Caco-2 (cell line): ENCODE measurements at regions of chr12 and their contacts with region 1.

Region 1: GRCh38 chr12:80200408-80200807 is 101.1 kb downstream of the OTOGL start:
- DNase-seq: no peak
- H3K4me3 ChIP-seq: no peak overlapping the region
- H3K4me3 Mint-ChIP-seq: no peak overlapping the region
- H3K27ac Mint-ChIP-seq: no peak overlapping the region
- H3K4me1 ChIP-seq: no peaks in the 10 kb centered on the region
- H3K4me1 Mint-ChIP-seq: peaks cover 6% of the 10 kb centered on the region
- H3K27me3 ChIP-seq: no peaks in the 10 kb centered on the region
- H3K27me3 Mint-ChIP-seq: peaks cover 3% of the 10 kb centered on the region
- CTCF ChIP-seq: no peak

Region 2: DNA sequence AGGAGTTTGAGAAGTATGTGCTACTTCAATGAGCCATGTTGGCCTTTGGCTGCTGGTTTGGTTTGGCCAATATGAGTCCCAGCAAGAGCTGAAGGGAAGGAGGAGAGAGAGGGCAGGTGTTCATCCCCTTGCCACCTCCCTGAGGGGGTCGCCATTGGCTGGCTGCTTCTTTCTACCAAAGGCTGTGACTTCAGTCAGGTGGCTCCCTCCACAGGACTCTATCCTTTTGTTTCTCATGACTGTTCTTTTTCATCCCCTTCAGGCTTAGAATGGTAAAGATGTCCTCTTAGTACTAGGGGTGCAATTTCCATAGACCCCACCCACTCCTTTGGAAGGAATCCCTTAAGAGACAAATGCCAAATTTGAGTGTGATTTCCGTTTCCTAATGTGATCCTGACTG is 132.2 kb before region 1 on chr12:
- CTCF ChIA-PET with region 1: no interaction called
- POLR2A ChIA-PET with region 1: no interaction called
- intact Hi-C with region 1: no loop called
- DNase-seq: peak in 1 of 2 experiments; percentile 26
- H3K4me3 ChIP-seq: no peak overlapping the region
- H3K4me3 Mint-ChIP-seq: no peak overlapping the region
- H3K27ac Mint-ChIP-seq: no peak overlapping the region
- H3K4me1 ChIP-seq: no peaks in the 10 kb centered on the region
- H3K4me1 Mint-ChIP-seq: no peaks in the 10 kb centered on the region
- H3K27me3 ChIP-seq: no peaks in the 10 kb centered on the region
- H3K27me3 Mint-ChIP-seq: peaks cover 12% of the 10 kb centered on the region
- CTCF ChIP-seq: no peak

Region 3: DNA sequence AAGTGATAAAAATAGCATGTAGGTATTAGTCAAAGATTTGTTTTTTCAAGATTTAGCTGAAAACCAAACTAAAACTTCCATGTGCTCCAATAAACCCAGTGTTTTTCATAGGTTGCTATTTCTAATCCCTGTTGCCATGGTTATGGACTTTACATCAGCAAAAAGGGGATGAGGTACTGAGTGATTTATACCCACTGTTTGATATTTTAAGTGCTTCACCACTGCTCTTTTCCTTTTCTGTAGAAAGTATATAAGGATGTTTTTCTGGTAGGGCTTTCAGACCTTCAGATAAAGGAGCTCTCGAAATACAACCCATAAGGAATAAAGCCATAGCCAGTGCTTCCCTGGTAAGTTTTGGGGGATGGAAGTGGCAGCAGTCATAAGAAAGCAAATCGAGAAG is 101.1 kb before region 1 on chr12 and contains the start of gene OTOGL:
- CTCF ChIA-PET with region 1: no interaction called
- POLR2A ChIA-PET with region 1: no interaction called
- intact Hi-C with region 1: no loop called
- DNase-seq: no peak
- H3K4me3 ChIP-seq: no peak within 1 kb of the TSS
- H3K4me3 Mint-ChIP-seq: no peak within 1 kb of the TSS
- H3K27ac Mint-ChIP-seq: no peak within 1 kb of the TSS
- H3K4me1 ChIP-seq: no peaks in the 10 kb centered on the region
- H3K4me1 Mint-ChIP-seq: no peaks in the 10 kb centered on the region
- H3K27me3 ChIP-seq: no peaks in the 10 kb centered on the region
- H3K27me3 Mint-ChIP-seq: peaks cover 8% of the 10 kb centered on the region
- CTCF ChIP-seq: no peak
- total RNA-seq, gene OTOGL: 0.39 and 0.72 TPM in 2 replicates

Region 4: DNA sequence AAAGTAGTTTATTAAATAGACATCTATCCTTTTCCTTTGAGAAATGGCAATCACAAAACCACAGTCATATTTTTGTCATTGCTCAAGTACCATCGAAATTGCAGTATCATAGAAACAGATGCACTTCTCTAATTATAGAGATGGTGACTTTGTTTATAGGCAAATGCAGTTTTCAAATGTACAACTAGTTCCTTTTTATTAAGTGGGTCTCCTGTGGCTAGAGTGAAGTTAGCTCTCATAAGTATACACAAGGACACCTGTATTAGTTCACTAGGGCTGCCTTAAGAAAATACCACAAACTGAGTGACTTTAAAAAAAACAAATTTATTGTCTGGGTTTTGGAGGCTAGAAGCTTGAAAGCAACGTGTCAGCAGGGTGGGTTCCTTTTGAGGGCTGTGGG is 38.2 kb before region 1 on chr12:
- CTCF ChIA-PET with region 1: no interaction called
- POLR2A ChIA-PET with region 1: no interaction called
- intact Hi-C with region 1: no loop called
- DNase-seq: no peak
- H3K4me3 ChIP-seq: no peak overlapping the region
- H3K4me3 Mint-ChIP-seq: no peak overlapping the region
- H3K27ac Mint-ChIP-seq: no peak overlapping the region
- H3K4me1 ChIP-seq: no peaks in the 10 kb centered on the region
- H3K4me1 Mint-ChIP-seq: no peaks in the 10 kb centered on the region
- H3K27me3 ChIP-seq: no peaks in the 10 kb centered on the region
- H3K27me3 Mint-ChIP-seq: peaks cover 8% of the 10 kb centered on the region
- CTCF ChIP-seq: no peak

Region 5: GRCh38 chr12:80219345-80219744 is 18.9 kb after region 1 on chr12:
- CTCF ChIA-PET with region 1: interaction called, 19 read pairs
- POLR2A ChIA-PET with region 1: no interaction called
- intact Hi-C with region 1: loop called (anchors 1 kb)
- DNase-seq: peak; percentile 40 to 63
- H3K4me3 ChIP-seq: no peak overlapping the region
- H3K4me3 Mint-ChIP-seq: peak overlapping the region; percentile 53
- H3K27ac Mint-ChIP-seq: no peak overlapping the region
- H3K4me1 ChIP-seq: peaks cover 32% of the 10 kb centered on the region
- H3K4me1 Mint-ChIP-seq: peaks cover 16% of the 10 kb centered on the region
- H3K27me3 ChIP-seq: no peaks in the 10 kb centered on the region
- H3K27me3 Mint-ChIP-seq: no peaks in the 10 kb centered on the region
- CTCF ChIP-seq: no peak

Region 6: GRCh38 chr12:80241576-80242273 is 41.3 kb after region 1 on chr12:
- CTCF ChIA-PET with region 1: no interaction called
- POLR2A ChIA-PET with region 1: no interaction called
- intact Hi-C with region 1: no loop called
- DNase-seq: no peak
- H3K4me3 ChIP-seq: no peak overlapping the region
- H3K4me3 Mint-ChIP-seq: no peak overlapping the region
- H3K27ac Mint-ChIP-seq: no peak overlapping the region
- H3K4me1 ChIP-seq: no peaks in the 10 kb centered on the region
- H3K4me1 Mint-ChIP-seq: no peaks in the 10 kb centered on the region
- H3K27me3 ChIP-seq: no peaks in the 10 kb centered on the region
- H3K27me3 Mint-ChIP-seq: no peaks in the 10 kb centered on the region
- CTCF ChIP-seq: no peak

Region 7: GRCh38 chr12:80269803-80270552 is 69.6 kb after region 1 on chr12:
- CTCF ChIA-PET with region 1: interaction called, 62 read pairs
- POLR2A ChIA-PET with region 1: interaction called, 3 read pairs
- intact Hi-C with region 1: loop called (anchors 1 kb)
- DNase-seq: peak in 1 of 2 experiments; percentile 51
- H3K4me3 ChIP-seq: no peak overlapping the region
- H3K4me3 Mint-ChIP-seq: no peak overlapping the region
- H3K27ac Mint-ChIP-seq: no peak overlapping the region
- H3K4me1 ChIP-seq: no peaks in the 10 kb centered on the region
- H3K4me1 Mint-ChIP-seq: peaks cover 7% of the 10 kb centered on the region
- H3K27me3 ChIP-seq: no peaks in the 10 kb centered on the region
- H3K27me3 Mint-ChIP-seq: peaks cover 3% of the 10 kb centered on the region
- CTCF ChIP-seq: peak; percentile 55 to 63